ENCODE measurements at regions of chr11 and their contacts with region 1.

Region 1: DNA sequence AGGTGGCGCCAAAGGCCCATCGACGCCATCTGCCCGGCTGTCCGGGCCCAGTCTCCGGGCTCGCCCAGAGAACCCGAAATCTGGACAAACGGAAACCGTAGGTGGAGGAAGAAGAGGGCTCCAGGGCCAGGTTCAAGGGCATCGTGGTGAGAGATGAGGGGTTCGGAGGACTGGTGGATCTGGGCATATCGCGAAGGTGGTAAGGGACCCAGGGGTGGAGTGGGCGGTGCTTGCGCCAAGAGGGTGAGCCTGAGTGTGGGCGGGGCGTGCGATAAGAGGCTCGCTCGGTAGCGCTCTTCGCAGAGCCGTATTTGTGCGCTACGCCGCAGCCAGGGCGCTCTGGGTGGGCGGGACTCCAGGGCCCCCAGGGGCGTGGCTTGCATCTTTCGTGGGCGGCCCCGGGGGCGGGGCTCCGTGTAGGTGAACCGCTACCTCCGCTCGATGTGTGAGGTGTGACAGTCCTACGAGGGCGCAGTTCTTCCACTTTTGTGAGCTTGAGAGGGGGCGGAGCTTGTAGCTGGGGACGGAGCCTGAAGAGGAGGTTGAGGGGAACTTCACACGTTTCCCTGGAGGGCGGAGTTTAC is 4.8 kb downstream of the CD248 start:
- DNase-seq: peak; percentile 95
- H3K4me3 ChIP-seq: peak overlapping the region; percentile 34 to 43
- H3K27ac ChIP-seq: peak overlapping the region; percentile 82 to 87
- H3K4me1 ChIP-seq: no peaks in the 10 kb centered on the region
- H3K27me3 ChIP-seq: no peaks in the 10 kb centered on the region
- CTCF ChIP-seq: peak; percentile 63 to 96 (median 90)
- POLR2A ChIP-seq: peak; percentile 39

Region 2: GRCh38 chr11:66328307-66329144 is 16.5 kb after region 1 on chr11:
- intact Hi-C with region 1: loop called (anchors 2 kb)
- DNase-seq: peak; percentile 57
- H3K4me3 ChIP-seq: no peak overlapping the region
- H3K27ac ChIP-seq: no peak overlapping the region
- H3K4me1 ChIP-seq: no peaks in the 10 kb centered on the region
- H3K27me3 ChIP-seq: no peaks in the 10 kb centered on the region
- CTCF ChIP-seq: peak; percentile 89 to 97 (median 95)
- POLR2A ChIP-seq: no peak

Region 3: DNA sequence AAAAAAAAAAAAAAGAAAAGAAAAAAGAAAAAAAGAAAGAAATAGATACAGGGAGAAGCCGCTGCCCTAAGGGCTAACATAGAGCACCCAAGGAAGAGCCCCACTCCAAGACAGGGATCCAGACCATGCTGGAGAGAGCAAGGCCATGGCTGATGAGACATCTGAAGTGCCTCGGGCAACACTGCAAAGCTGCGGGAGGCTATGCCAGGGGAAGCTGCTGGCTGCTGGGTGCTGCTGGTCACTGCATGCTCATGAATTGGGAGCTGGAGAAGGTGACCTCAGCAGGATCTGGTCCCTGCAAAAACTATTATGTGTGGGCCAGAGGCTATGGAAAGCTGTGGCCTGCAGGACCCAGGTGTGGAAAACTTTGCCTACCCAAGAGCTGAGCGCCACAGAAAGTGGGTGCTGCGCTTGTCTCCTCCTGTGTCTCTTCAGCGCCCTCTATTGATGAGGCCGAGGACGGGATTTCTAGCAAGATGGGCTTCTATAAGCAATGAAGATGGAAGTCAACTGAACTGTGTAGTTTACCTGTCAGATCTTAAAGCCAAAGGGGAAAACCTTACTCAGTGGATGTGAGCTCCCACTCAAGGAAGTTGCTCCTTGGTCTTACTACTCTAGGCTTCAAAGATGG is 76.8 kb after region 1 on chr11:
- intact Hi-C with region 1: loop called (anchors 2 kb)
- DNase-seq: peak; percentile 75
- H3K4me3 ChIP-seq: no peak overlapping the region
- H3K27ac ChIP-seq: no peak overlapping the region
- H3K4me1 ChIP-seq: no peaks in the 10 kb centered on the region
- H3K27me3 ChIP-seq: no peaks in the 10 kb centered on the region
- CTCF ChIP-seq: peak in 3 of 4 experiments; percentile 53 to 72 (median 63)
- POLR2A ChIP-seq: no peak

Measured in prostate gland (tissue), 2 donors.